ENCODE measurements at regions of chr9 and their contacts with region 1.

Region 1: DNA sequence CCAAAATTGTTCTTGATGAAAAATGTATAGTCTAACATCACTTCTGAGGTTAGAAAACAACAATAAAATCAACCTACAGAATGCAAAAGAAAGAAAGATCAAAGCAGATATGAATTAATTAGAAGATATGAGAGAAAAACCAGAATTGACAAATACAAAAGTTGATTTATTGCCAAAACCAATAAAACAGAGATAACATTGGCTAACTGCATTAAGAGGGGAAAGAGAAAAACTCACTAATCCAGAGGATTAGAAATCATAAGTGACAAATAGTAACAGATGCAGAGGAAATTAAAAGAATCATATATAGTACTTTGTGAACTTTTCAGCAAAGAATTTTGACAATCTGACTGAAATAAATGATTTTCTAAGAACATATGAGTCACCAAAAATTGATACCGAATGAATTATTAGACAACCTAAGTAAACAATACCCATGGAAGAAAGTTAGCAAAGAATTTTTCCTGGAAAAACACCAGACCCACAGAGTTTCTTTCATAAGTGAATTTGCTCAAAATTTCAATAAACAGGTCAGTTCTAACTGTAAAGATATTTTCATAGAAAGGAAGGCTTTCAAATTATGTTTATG is 167.7 kb downstream of the AOPEP start:
- DNase-seq: no peak
- H3K4me3 Mint-ChIP-seq: no peak overlapping the region
- H3K27ac Mint-ChIP-seq: no peak overlapping the region
- H3K4me1 Mint-ChIP-seq: peaks cover 20% of the 10 kb centered on the region
- H3K27me3 Mint-ChIP-seq: peaks cover 4% of the 10 kb centered on the region

Region 2: GRCh38 chr9:94952565-94953373 is 58.6 kb after region 1 on chr9:
- intact Hi-C with region 1: loop called (anchors 5 kb)
- DNase-seq: peak; percentile 11
- H3K4me3 Mint-ChIP-seq: peak overlapping the region; percentile 66
- H3K27ac Mint-ChIP-seq: peak overlapping the region; percentile 79
- H3K4me1 Mint-ChIP-seq: peaks cover 45% of the 10 kb centered on the region
- H3K27me3 Mint-ChIP-seq: peaks cover 1% of the 10 kb centered on the region

Measured in activated T-helper 1 cell treated with anti-CD3 and anti-CD28 coated beads, Interleukin-12 subunit alpha, Interleukin-12 subunit beta, Interleukin-2, Interleukin-4 antibody, amounts not matched to agents 30 ng/mL and 10 ng/mL and 1 ng/mL, durations not matched to agents 14 hours and 24 hours and 36 hours (primary cell).